Heart right ventricle (tissue), 16 donors: ENCODE measurements at regions of chr12 and their contacts with region 1.

Region 1: DNA sequence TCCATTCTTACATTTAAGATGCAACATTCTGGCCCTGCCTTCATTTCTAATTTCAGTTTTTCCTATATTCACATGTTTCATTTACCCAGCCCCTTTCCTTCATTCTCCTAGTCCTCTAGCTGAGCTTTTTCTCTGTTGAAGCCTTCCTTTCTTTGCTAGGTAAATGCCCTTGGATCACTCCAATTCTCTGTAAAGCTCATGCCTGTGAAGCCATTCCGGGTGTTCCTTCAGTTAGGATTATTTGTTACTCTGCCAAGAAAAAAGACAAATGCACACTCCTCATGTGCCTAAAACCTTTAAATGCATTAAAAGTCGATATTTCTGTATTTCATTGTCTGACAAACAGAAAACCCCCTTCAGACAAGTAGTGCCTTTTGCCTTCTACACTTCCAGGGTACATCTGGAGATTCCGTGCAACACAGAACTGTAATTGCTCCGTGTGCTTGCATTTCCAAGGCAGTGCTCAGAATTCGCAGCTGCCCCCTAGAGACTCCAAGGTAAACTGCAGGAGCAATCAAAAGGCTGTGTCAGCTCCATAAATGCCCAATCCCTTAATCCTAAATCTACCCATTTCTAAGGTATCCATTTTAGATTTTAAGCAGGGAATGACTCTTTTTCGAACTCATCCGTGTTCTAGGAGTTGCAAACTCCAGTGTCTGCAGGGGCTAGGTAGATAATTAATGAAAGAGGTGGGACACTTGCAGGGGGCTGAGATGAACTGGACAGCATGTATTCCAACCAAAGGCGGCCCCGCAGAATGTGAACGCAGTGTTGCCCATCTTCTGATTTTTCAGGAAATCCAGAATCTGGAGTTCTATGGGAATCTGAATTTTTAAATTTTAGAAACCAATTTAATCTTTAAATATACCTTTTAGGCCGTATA is 320.2 kb downstream of the GRIN2B start:
- DNase-seq: peak; percentile 13 to 23
- ATAC-seq: peak in 7 of 8 donors; percentile 46 to 79 (median 67)
- H3K4me3 ChIP-seq: no peak overlapping the region
- H3K27ac ChIP-seq: no peak overlapping the region
- H3K4me1 ChIP-seq: no peaks in the 10 kb centered on the region
- H3K27me3 ChIP-seq: peaks cover 0 to 42% (median 5%) of the 10 kb centered on the region in 7 donors
- CTCF ChIP-seq: peak; percentile 43 to 84 (median 80)

Region 2: GRCh38 chr12:13255792-13256691 is 405.2 kb before region 1 on chr12:
- intact Hi-C with region 1: loop called in 2 of 10 experiments (anchors 5 to 10 kb)
- DNase-seq: peak; percentile 94 to 95
- ATAC-seq: peak; percentile 98 to 99 (median 99)
- H3K4me3 ChIP-seq: peak overlapping the region in 8 of 10 donors; percentile 8 to 49 (median 42)
- H3K27ac ChIP-seq: peak overlapping the region in 1 of 10 donors; percentile 24
- H3K4me1 ChIP-seq: peaks cover 0 to 29% (median 13%) of the 10 kb centered on the region in 9 donors
- H3K27me3 ChIP-seq: peaks cover 0 to 2% (median 0%) of the 10 kb centered on the region in 7 donors
- CTCF ChIP-seq: peak; percentile 87 to 99 (median 98)

Region 3: DNA sequence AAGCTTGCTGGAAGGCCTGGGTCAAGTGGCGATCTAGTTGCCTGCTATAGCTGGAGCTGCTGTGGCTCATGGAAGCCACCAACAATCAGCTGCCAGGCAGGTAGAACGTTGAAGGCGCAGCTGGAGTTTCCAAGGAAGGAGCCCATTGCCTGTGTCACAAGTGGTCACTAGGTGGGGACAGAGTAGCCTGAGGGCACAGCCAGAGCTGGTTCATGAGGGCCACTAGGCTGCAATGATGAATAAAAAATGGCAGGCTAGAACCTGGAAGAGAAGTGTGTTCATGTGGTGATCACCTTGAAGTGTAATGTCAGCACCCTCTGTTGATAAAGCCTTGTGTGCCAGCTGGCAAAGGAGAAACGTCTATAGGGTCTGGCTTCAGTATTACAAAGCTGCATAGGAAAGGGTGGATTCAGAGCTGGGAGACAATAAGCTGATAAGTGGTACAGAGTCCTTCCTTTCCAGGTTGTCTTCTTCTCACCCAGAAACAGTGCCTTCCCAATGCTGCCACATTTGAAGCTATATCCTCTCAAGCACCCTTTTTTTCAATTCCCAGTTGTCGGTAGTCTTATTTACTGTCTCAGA is 298.9 kb before region 1 on chr12:
- intact Hi-C with region 1: loop called in 8 of 10 experiments (anchors 1 to 10 kb)
- DNase-seq: peak; percentile 34
- ATAC-seq: peak in 6 of 8 donors; percentile 38 to 84 (median 68)
- H3K4me3 ChIP-seq: no peak overlapping the region
- H3K27ac ChIP-seq: no peak overlapping the region
- H3K4me1 ChIP-seq: no peaks in the 10 kb centered on the region
- H3K27me3 ChIP-seq: peaks cover 0 to 37% (median 24%) of the 10 kb centered on the region in 7 donors
- CTCF ChIP-seq: peak; percentile 54 to 80 (median 77)

Region 4: DNA sequence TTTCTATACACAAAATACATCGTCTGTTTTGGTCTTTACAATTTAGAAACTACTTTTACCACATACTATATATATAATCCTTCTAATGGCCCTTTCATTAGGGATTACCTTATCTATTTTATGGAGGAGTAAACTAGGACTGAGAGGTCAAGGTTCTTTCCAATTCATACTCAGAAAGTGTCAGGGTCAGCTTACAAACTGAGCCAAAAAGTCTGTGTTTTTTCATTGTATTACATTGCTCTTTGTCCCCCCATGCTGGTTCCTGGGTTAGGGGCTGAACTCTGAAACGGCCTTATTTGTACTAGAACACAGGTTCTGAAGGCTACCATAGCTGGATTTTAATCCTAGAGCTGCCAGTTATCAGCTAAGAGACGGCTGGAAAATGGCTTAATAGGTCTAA is 47.9 kb before region 1 on chr12:
- intact Hi-C with region 1: no loop called
- DNase-seq: no peak
- ATAC-seq: no peak
- H3K4me3 ChIP-seq: no peak overlapping the region
- H3K27ac ChIP-seq: no peak overlapping the region
- H3K4me1 ChIP-seq: peaks cover 0 to 4% (median 0%) of the 10 kb centered on the region in 9 donors
- H3K27me3 ChIP-seq: no peaks in the 10 kb centered on the region
- CTCF ChIP-seq: no peak